ENCODE measurements at regions of chr14 and their contacts with region 1.

Region 1: DNA sequence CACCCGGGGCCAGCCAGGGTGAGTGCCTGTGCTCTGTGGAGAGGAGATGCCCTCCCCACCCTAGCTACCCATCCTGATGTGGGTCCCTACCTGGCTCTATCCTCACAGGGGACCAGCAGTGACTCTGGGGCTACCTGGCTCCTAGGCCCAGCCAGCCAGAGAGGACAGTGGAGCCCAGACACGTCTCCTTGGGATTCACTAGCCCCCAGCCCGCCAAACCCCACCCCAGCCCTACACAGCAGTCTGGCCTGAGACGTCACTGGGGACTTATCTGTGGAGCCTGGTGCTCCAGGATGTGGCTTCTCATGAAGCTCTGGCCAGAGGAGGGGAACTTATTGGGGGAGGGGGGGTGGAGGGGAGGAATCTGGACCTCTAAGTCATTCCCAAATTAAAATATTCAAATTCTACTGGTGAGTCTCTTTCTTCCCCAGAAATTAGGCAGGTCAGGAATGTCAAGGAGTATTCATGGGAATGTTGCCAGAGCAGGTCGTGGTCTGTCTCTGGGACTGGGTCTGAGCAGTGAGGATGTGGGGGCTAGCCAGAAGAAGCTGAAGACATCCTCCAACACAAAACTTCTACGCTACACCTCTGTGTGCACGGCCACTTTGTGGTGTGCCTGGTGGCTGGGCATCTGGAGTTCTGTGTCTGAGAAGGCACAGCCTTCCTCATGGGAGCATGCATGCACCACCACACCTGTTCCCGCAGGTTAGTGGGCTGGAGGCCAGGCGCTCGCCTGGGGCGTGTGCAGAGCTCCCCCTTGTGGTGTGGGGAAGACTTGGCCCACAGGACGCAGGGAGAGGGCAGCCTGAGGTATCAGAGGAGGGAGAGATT is 2.7 kb downstream of the CMTM5 start:
- DNase-seq: peak; percentile 72
- ATAC-seq: peak; percentile 93
- H3K4me3 Mint-ChIP-seq: no peak overlapping the region
- H3K27ac Mint-ChIP-seq: no peak overlapping the region
- H3K4me1 Mint-ChIP-seq: peaks cover 2% of the 10 kb centered on the region
- H3K27me3 Mint-ChIP-seq: peaks cover 6% of the 10 kb centered on the region

Region 2: GRCh38 chr14:23327947-23328744 is 51.4 kb before region 1 on chr14:
- CTCF ChIA-PET with region 1: interaction called, 87 read pairs
- POLR2A ChIA-PET with region 1: interaction called, 7 read pairs
- DNase-seq: peak; percentile 79
- ATAC-seq: peak; percentile 68
- H3K4me3 Mint-ChIP-seq: no peak overlapping the region
- H3K27ac Mint-ChIP-seq: no peak overlapping the region
- H3K4me1 Mint-ChIP-seq: peaks cover 6% of the 10 kb centered on the region
- H3K27me3 Mint-ChIP-seq: no peaks in the 10 kb centered on the region

Region 3: GRCh38 chr14:23344442-23344841 is 35.1 kb before region 1 on chr14:
- CTCF ChIA-PET with region 1: interaction called, 12 read pairs
- POLR2A ChIA-PET with region 1: no interaction called
- DNase-seq: no peak
- ATAC-seq: no peak
- H3K4me3 Mint-ChIP-seq: no peak overlapping the region
- H3K27ac Mint-ChIP-seq: no peak overlapping the region
- H3K4me1 Mint-ChIP-seq: no peaks in the 10 kb centered on the region
- H3K27me3 Mint-ChIP-seq: peaks cover 6% of the 10 kb centered on the region

Region 4: GRCh38 chr14:23366426-23366921 is 13.1 kb before region 1 on chr14:
- CTCF ChIA-PET with region 1: interaction called, 16 read pairs
- POLR2A ChIA-PET with region 1: no interaction called
- DNase-seq: no peak
- ATAC-seq: no peak
- H3K4me3 Mint-ChIP-seq: no peak overlapping the region
- H3K27ac Mint-ChIP-seq: no peak overlapping the region
- H3K4me1 Mint-ChIP-seq: peaks cover 8% of the 10 kb centered on the region
- H3K27me3 Mint-ChIP-seq: peaks cover 41% of the 10 kb centered on the region

Region 5: GRCh38 chr14:23392613-23393012 is 13.0 kb after region 1 on chr14:
- CTCF ChIA-PET with region 1: interaction called, 10 read pairs
- POLR2A ChIA-PET with region 1: no interaction called
- DNase-seq: no peak
- ATAC-seq: no peak
- H3K4me3 Mint-ChIP-seq: no peak overlapping the region
- H3K27ac Mint-ChIP-seq: no peak overlapping the region
- H3K4me1 Mint-ChIP-seq: no peaks in the 10 kb centered on the region
- H3K27me3 Mint-ChIP-seq: no peaks in the 10 kb centered on the region

Region 6: GRCh38 chr14:23403139-23403438 is 23.5 kb after region 1 on chr14:
- CTCF ChIA-PET with region 1: no interaction called
- POLR2A ChIA-PET with region 1: no interaction called
- DNase-seq: no peak
- ATAC-seq: no peak
- H3K4me3 Mint-ChIP-seq: no peak overlapping the region
- H3K27ac Mint-ChIP-seq: no peak overlapping the region
- H3K4me1 Mint-ChIP-seq: no peaks in the 10 kb centered on the region
- H3K27me3 Mint-ChIP-seq: no peaks in the 10 kb centered on the region

Region 7: DNA sequence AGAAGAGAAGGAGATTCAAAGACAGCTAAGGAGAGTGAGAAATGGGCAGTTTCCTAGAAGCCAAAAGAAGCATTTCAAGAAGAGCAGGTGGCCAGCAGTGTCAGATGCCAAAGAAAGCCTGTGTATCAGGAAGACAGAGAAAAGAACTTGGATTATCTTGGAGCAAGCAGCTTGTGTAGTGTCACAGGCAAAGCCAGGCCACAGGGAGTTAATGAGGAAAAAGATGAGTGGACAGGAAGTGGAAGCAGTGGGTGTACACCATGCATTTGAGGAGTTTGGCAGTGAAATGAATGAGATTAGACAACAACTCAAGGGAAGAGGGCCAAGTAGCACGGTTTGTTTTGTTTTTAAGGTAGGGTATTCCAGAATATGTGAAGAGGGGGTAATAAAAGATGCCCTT is 61.5 kb after region 1 on chr14:
- CTCF ChIA-PET with region 1: no interaction called
- POLR2A ChIA-PET with region 1: no interaction called
- DNase-seq: no peak
- ATAC-seq: no peak
- H3K4me3 Mint-ChIP-seq: no peak overlapping the region
- H3K27ac Mint-ChIP-seq: no peak overlapping the region
- H3K4me1 Mint-ChIP-seq: no peaks in the 10 kb centered on the region
- H3K27me3 Mint-ChIP-seq: peaks cover 3% of the 10 kb centered on the region

Measured in activated CD8-positive, alpha-beta T cell treated with anti-CD3 and anti-CD28 coated beads, Interleukin-2, amount 10 ng/mL, durations not matched to agents 7 days and 5 days (primary cell).